ENCODE measurements at regions of chrX and their contacts with region 1.

Region 1: DNA sequence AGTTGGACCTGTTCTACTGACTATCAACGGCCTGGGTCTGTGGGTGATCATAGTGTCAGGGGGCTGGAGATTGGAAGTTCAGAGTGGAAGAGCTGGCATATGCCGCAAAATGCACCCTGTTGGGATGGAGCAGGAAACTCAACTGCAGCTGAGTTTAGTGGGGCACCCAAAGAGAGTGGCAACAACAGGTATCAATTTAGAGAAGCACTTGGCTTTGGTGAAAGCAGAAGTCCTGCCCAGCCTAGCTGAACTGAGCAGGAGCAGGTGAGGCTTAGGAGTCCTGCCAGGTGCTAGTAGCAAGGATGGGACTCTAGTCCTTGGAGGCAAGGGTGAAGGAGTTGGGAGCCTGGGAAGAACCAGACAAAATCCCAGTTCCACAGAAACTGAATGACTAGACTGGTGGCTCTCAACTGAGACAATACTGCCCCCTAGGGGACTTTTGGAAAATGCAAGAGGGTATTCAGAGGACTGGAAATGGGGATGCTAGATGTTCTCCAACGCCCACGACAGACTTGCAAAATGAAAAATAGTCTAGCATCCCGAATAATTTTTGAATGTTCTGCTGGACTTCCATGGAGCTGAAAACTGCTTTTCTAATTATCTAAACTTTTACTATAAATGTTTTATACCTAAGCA is 49.4 kb downstream of the RTL9 start:
- DNase-seq: no peak
- ATAC-seq: peak in 1 of 2 donors; percentile 69
- H3K4me3 ChIP-seq: no peak overlapping the region
- H3K27ac ChIP-seq: no peak overlapping the region
- H3K4me1 ChIP-seq: peaks cover 1% of the 10 kb centered on the region
- H3K27me3 ChIP-seq: no peaks in the 10 kb centered on the region

Region 2: DNA sequence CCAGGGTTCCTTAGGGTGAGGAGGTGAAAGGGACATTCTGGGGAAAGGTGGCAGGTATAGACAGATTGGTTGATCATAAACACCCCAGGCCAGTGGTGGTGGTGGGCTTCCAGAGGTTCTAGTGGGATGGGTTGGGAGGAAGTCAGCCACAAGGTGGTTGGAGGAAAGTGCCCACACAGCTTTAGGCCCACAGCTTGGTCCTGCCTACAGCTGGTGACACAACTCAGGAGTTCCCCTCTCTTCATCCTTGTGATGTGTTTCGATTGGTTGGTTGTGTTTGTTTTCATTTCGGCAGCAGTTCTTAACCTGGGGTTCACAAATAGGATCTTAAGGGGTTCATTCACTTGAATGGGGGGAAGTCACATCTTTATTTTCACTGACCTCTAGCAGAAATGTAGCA is 248.2 kb before region 1 on chrX:
- intact Hi-C with region 1: loop called (anchors 2 to 5 kb)
- DNase-seq: no peak
- ATAC-seq: no peak
- H3K4me3 ChIP-seq: no peak overlapping the region
- H3K27ac ChIP-seq: no peak overlapping the region
- H3K4me1 ChIP-seq: no peaks in the 10 kb centered on the region
- H3K27me3 ChIP-seq: no peaks in the 10 kb centered on the region

Region 3: GRCh38 chrX:110167952-110168451 is 240.0 kb before region 1 on chrX:
- intact Hi-C with region 1: loop called in 3 of 4 experiments (anchors 5 kb)
- DNase-seq: peak in 1 of 3 donors; percentile 60
- ATAC-seq: peak in 1 of 2 donors; percentile 48
- H3K4me3 ChIP-seq: no peak overlapping the region
- H3K27ac ChIP-seq: no peak overlapping the region
- H3K4me1 ChIP-seq: peaks cover 1% of the 10 kb centered on the region
- H3K27me3 ChIP-seq: no peaks in the 10 kb centered on the region

Measured in right cardiac atrium (tissue), 5 donors.